CD8-positive, alpha-beta T cell (primary cell): ENCODE measurements at regions of chr21 and their contacts with region 1.

Region 1: DNA sequence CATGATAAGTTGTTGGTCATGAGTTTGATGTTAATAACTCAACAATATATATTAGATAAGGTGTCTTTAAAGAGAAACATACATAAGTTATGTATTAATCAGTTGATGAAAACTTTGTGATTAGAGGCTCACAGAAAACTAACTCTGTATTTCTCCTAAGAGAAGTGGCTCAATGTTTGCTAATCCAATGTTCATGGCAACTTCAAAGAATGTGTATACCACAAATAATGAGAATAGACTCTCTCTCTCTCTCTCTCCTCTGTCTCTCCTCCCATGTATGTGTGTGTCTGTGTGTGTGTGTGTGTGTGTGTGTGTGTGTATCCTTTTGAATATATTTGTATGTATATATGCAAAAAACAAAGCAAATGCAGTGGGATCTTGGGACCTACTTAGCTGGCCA is 1304.9 kb downstream of the MRPL39 start:
- DNase-seq: no peak
- ATAC-seq: no peak
- H3K4me3 ChIP-seq: no peak overlapping the region
- H3K4me3 Mint-ChIP-seq: no peak overlapping the region
- H3K27ac ChIP-seq: no peak overlapping the region
- H3K27ac Mint-ChIP-seq: no peak overlapping the region
- H3K4me1 ChIP-seq: no peaks in the 10 kb centered on the region
- H3K4me1 Mint-ChIP-seq: peaks cover 4% of the 10 kb centered on the region
- H3K27me3 ChIP-seq: no peaks in the 10 kb centered on the region
- H3K27me3 Mint-ChIP-seq: no peaks in the 10 kb centered on the region
- CTCF ChIP-seq: no peak

Region 2: DNA sequence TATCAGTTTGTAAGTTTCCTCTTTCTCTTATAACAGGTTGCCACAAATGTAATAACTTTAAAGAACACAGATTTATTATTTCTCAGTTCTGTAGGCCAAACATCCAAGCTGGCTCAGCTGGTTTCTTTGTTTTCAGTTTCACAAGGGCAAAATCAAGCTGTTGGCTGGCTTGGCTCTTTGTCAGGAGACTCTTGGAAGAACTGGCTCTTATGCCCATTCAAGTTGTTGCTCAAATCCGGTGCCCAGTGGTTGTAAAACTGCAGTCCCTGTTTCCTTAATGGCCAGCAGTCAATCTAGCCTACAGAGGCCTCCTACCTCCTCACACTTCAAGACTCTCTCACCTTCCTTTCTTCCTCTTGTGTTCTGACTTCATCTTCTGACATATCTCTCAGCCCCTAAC is 133.8 kb after region 1 on chr21:
- CTCF ChIA-PET with region 1: no interaction called
- POLR2A ChIA-PET with region 1: no interaction called
- intact Hi-C with region 1: loop called in 1 of 2 experiments (anchors 10 kb)
- DNase-seq: no peak
- ATAC-seq: no peak
- H3K4me3 ChIP-seq: no peak overlapping the region
- H3K4me3 Mint-ChIP-seq: no peak overlapping the region
- H3K27ac ChIP-seq: no peak overlapping the region
- H3K27ac Mint-ChIP-seq: no peak overlapping the region
- H3K4me1 ChIP-seq: no peaks in the 10 kb centered on the region
- H3K4me1 Mint-ChIP-seq: peaks cover 3% of the 10 kb centered on the region
- H3K27me3 ChIP-seq: no peaks in the 10 kb centered on the region
- H3K27me3 Mint-ChIP-seq: no peaks in the 10 kb centered on the region
- CTCF ChIP-seq: no peak